Activated B cell treated with CpG ODN at 0.5 μM for 24 hours (primary cell): ENCODE measurements at regions of chr21 and their contacts with region 1.

Region 1: GRCh38 chr21:45152265-45152746 is 77.9 kb downstream of the ADARB1 start:
- DNase-seq: peak; percentile 51
- ATAC-seq: peak; percentile 98
- H3K4me3 Mint-ChIP-seq: peak overlapping the region; percentile 68
- H3K27ac Mint-ChIP-seq: peak overlapping the region; percentile 26
- H3K4me1 Mint-ChIP-seq: peaks cover 44% of the 10 kb centered on the region
- H3K27me3 Mint-ChIP-seq: no peaks in the 10 kb centered on the region
- CTCF ChIP-seq: no peak

Region 2: GRCh38 chr21:45050786-45051489 is 101.4 kb before region 1 on chr21:
- CTCF ChIA-PET with region 1: no interaction called
- POLR2A ChIA-PET with region 1: no interaction called
- intact Hi-C with region 1: no loop called
- DNase-seq: no peak
- ATAC-seq: no peak
- H3K4me3 Mint-ChIP-seq: no peak overlapping the region
- H3K27ac Mint-ChIP-seq: no peak overlapping the region
- H3K4me1 Mint-ChIP-seq: no peaks in the 10 kb centered on the region
- H3K27me3 Mint-ChIP-seq: peaks cover 17% of the 10 kb centered on the region
- CTCF ChIP-seq: no peak

Region 3: GRCh38 chr21:45209685-45210284 is 57.5 kb after region 1 on chr21:
- CTCF ChIA-PET with region 1: no interaction called
- POLR2A ChIA-PET with region 1: no interaction called
- intact Hi-C with region 1: loop called (anchors 2 kb)
- DNase-seq: no peak
- ATAC-seq: peak; percentile 80
- H3K4me3 Mint-ChIP-seq: peak overlapping the region; percentile 3
- H3K27ac Mint-ChIP-seq: no peak overlapping the region
- H3K4me1 Mint-ChIP-seq: peaks cover 37% of the 10 kb centered on the region
- H3K27me3 Mint-ChIP-seq: no peaks in the 10 kb centered on the region
- CTCF ChIP-seq: no peak

Region 4: GRCh38 chr21:45923146-45923545 is 770.8 kb after region 1 on chr21:
- CTCF ChIA-PET with region 1: no interaction called
- POLR2A ChIA-PET with region 1: no interaction called
- intact Hi-C with region 1: loop called (anchors 5 kb)
- DNase-seq: no peak
- ATAC-seq: peak; percentile 50
- H3K4me3 Mint-ChIP-seq: no peak overlapping the region
- H3K27ac Mint-ChIP-seq: no peak overlapping the region
- H3K4me1 Mint-ChIP-seq: peaks cover 2% of the 10 kb centered on the region
- H3K27me3 Mint-ChIP-seq: no peaks in the 10 kb centered on the region
- CTCF ChIP-seq: no peak